HepG2 (cell line): ENCODE measurements at regions of chr3 and their contacts with region 1.

Region 1: GRCh38 chr3:136075218-136075808 is 109.8 kb downstream of the PPP2R3A start:
- DNase-seq: peak; percentile 72
- ATAC-seq: peak; percentile 63
- H3K4me3 ChIP-seq: no peak overlapping the region
- H3K27ac ChIP-seq: no peak overlapping the region
- H3K4me1 ChIP-seq: no peaks in the 10 kb centered on the region
- H3K27me3 ChIP-seq: no peaks in the 10 kb centered on the region; a peak in 1 of 5 replicates
- CTCF ChIP-seq: peak; percentile 88
- EP300 ChIP-seq: no peak
- POLR2A ChIP-seq: no peak
- RAD21 ChIP-seq: peak; percentile 81

Region 2: DNA sequence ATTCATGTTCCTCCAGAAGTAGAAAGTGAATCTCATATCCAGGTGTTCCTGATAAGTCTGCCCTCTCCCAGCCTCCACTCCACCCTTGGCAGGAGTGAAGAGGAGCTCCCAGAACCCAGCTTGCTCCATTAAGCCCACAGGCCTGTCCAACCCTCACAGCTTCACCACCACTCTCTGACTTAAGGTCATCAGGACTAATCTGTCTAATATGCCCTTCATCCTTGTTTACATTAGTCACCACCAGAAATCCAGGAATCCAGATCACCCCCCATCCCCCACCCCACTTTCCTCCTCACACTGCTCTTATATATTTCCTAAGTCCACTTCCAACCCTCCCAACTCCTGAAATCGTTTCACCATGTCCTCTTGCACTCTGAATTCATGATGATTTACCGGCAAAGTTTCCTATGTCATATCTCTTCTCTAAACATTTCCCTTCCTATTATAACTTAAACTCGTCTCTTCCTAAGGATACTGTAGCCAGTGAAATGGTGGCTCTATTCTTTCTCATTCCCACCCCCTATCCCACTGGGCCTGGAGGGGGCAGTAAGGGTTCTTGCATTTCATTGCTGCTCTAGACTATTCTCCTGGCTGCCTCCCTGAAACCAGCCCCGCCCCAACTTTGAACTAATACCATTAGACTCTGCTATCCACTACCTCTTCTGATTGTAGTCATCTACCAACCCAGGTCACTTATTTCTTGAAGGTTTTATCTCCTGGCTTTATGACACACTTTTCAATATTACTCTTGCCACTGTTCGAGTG is 66.4 kb before region 1 on chr3:
- CTCF ChIA-PET with region 1: no interaction called
- POLR2A ChIA-PET with region 1: no interaction called
- in situ Hi-C with region 1: no loop called
- intact Hi-C with region 1: no loop called
- DNase-seq: no peak
- ATAC-seq: no peak
- H3K4me3 ChIP-seq: no peak overlapping the region
- H3K27ac ChIP-seq: no peak overlapping the region
- H3K4me1 ChIP-seq: no peaks in the 10 kb centered on the region
- H3K27me3 ChIP-seq: no peaks in the 10 kb centered on the region
- CTCF ChIP-seq: no peak
- EP300 ChIP-seq: no peak
- POLR2A ChIP-seq: no peak
- RAD21 ChIP-seq: no peak

Region 3: GRCh38 chr3:136196401-136197158 is 121.3 kb after region 1 on chr3:
- CTCF ChIA-PET with region 1: no interaction called
- POLR2A ChIA-PET with region 1: no interaction called
- in situ Hi-C with region 1: no loop called
- intact Hi-C with region 1: loop called (anchors 5 kb)
- DNase-seq: peak; percentile 98
- ATAC-seq: peak; percentile 84
- H3K4me3 ChIP-seq: peak overlapping the region; percentile 45 to 93 (median 80); a peak in 5 of 6 replicates
- H3K27ac ChIP-seq: peak overlapping the region; percentile 92
- H3K4me1 ChIP-seq: peaks cover 22% of the 10 kb centered on the region
- H3K27me3 ChIP-seq: no peaks in the 10 kb centered on the region
- CTCF ChIP-seq: no peak; the same call in none of the 2 replicates
- EP300 ChIP-seq: no peak
- POLR2A ChIP-seq: peak in 1 of 2 experiments; percentile 91; a peak in 2 of 4 replicates
- RAD21 ChIP-seq: 0 out of 2 replicates have a peak, but pooled peaks have one; percentile 79

Region 4: DNA sequence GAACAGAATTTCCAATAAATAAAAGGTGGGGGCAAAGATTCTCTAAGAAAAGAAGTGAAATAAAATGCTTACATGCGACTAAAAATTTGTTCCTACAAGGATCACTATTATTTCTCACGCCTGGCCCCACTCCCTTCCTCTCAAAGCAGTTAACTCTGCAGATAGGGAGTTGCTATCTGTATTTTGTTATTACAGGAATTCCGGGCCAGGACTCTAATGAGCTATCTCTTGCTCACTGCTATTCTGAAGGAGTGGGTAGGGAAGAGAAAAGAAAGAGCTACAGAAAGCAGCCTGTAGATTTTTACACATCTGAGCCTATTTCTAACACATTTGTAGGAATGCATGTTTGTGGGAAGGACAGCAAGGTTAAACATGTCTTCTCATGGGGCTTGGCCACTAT is 315.3 kb after region 1 on chr3:
- CTCF ChIA-PET with region 1: no interaction called
- POLR2A ChIA-PET with region 1: no interaction called
- in situ Hi-C with region 1: no loop called
- intact Hi-C with region 1: loop called (anchors 2 kb)
- DNase-seq: no peak
- ATAC-seq: no peak
- H3K4me3 ChIP-seq: no peak overlapping the region
- H3K27ac ChIP-seq: no peak overlapping the region
- H3K4me1 ChIP-seq: no peaks in the 10 kb centered on the region
- H3K27me3 ChIP-seq: no peaks in the 10 kb centered on the region
- CTCF ChIP-seq: no peak
- EP300 ChIP-seq: no peak
- POLR2A ChIP-seq: no peak
- RAD21 ChIP-seq: no peak

Region 5: GRCh38 chr3:136861890-136862616 is 786.7 kb after region 1 on chr3 and contains the start of gene NCK1:
- CTCF ChIA-PET with region 1: no interaction called
- POLR2A ChIA-PET with region 1: no interaction called
- in situ Hi-C with region 1: no loop called
- intact Hi-C with region 1: loop called (anchors 5 kb)
- DNase-seq: peak; percentile 95
- ATAC-seq: peak; percentile 97
- H3K4me3 ChIP-seq: peak within 1 kb of the TSS; percentile 79 to 88 (median 87)
- H3K27ac ChIP-seq: peak within 1 kb of the TSS; percentile 90
- H3K4me1 ChIP-seq: peaks cover 29% of the 10 kb centered on the region
- H3K27me3 ChIP-seq: no peaks in the 10 kb centered on the region; a peak in 1 of 5 replicates
- CTCF ChIP-seq: peak; percentile 52
- EP300 ChIP-seq: no peak
- POLR2A ChIP-seq: peak; percentile 91 to 97
- RAD21 ChIP-seq: no peak
- total RNA-seq, gene NCK1: 30.4 and 51.0 TPM in 2 replicates

Region 6: DNA sequence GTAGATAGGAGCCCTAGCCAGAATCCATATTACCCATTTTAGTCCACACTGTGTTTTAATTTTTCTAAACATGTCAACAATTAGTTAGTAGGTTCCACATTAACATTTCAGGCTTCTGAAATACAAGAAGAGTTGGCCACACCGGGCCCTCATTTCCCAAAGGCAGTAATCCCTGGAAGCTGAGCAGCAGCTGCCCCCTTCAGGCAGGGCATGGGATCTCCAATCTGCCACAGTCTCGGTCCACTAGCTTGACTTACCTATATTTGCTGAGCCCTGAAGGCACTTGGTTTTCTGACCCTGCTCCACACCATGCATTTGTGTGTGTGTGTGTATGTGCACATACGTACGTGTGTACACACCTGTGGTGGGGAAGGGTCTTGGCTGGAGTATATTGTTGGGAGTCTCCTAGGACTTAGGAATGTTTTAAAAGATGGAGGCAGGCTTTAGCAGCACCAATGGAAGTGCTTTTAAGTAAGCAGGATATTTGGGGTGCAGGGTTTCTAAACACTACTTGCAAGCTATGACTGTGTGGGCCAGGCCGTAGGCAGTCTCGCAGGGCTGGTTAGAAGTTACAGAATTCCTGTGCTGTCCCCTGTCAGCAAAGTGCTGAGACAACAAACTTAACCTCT is 1617.6 kb after region 1 on chr3:
- CTCF ChIA-PET with region 1: no interaction called
- POLR2A ChIA-PET with region 1: no interaction called
- in situ Hi-C with region 1: no loop called
- intact Hi-C with region 1: loop called (anchors 5 kb)
- DNase-seq: peak; percentile 31
- ATAC-seq: peak; percentile 93
- H3K4me3 ChIP-seq: no peak overlapping the region
- H3K27ac ChIP-seq: no peak overlapping the region
- H3K4me1 ChIP-seq: no peaks in the 10 kb centered on the region
- H3K27me3 ChIP-seq: no peaks in the 10 kb centered on the region
- CTCF ChIP-seq: peak; percentile 82
- EP300 ChIP-seq: no peak
- POLR2A ChIP-seq: no peak
- RAD21 ChIP-seq: peak; percentile 55; the same call in 1 of the 2 replicates